ENCODE measurements at regions of chr20 and their contacts with region 1.

Region 1: DNA sequence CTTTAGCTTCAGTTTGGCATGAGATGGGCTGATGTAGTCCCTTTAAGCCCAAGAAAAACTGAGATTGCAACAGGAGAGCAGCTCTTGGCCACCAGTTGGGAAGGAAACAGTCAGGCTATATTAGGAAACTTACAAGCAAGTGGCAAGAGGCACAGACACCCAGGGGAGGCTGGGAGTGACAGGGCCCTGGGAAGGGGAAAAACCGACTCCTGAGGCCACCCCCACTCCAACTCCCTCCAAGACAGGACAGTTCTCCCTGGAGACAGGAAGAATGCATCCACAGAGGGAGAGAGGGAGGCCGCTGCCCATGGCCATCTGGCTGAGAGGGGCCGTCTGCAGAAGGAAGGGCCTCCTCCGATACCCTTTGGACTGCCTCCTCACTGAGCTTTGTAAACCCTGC is 20.5 kb downstream of the JPH2 start:
- DNase-seq: no peak
- ATAC-seq: peak; percentile 31; the same call in 1 of the 2 replicates
- H3K4me3 ChIP-seq: no peak overlapping the region
- H3K27ac ChIP-seq: no peak overlapping the region
- H3K4me1 ChIP-seq: peaks cover 11% of the 10 kb centered on the region
- H3K27me3 ChIP-seq: peaks cover 11% of the 10 kb centered on the region; the same call in 1 of the 2 replicates
- CTCF ChIP-seq: no peak

Region 2: DNA sequence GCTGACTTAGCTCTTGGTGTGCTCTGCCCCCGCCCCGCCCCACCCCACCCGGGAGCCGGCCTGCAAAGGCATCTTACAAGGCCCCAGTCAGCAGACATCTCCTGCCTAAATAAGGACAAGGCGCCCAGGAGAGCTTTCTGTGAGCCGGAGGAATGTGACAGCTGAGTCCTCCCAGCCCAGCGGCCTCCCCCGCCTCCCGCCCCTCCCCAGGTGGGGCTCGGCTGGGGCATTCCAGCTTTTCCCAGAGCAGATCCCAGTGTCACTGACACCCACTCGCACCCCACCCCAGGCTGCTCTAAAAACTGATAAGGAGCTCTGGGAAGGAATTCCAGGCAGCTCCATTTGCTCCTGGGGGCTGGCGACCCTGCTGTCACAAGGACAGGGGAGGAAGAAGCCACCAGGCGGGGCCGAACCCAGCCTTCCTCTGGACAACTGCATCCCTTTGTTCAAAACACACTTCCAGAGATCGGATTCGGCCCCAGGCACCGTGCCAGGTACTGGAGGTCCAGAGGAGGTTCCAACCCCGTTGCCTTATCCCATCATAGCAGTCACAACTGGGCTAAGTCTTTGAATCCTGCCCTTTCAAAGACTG is 29.2 kb before region 1 on chr20:
- CTCF ChIA-PET with region 1: no interaction called
- POLR2A ChIA-PET with region 1: interaction called, 10 read pairs
- in situ Hi-C with region 1: no loop called
- intact Hi-C with region 1: no loop called
- DNase-seq: no peak
- ATAC-seq: no peak
- H3K4me3 ChIP-seq: no peak overlapping the region
- H3K27ac ChIP-seq: no peak overlapping the region
- H3K4me1 ChIP-seq: no peaks in the 10 kb centered on the region
- H3K27me3 ChIP-seq: no peaks in the 10 kb centered on the region; the same call in 1 of the 2 replicates
- CTCF ChIP-seq: no peak

Measured in Panc1 (cell line).